ENCODE measurements at regions of chrX and their contacts with region 1.

Region 1: DNA sequence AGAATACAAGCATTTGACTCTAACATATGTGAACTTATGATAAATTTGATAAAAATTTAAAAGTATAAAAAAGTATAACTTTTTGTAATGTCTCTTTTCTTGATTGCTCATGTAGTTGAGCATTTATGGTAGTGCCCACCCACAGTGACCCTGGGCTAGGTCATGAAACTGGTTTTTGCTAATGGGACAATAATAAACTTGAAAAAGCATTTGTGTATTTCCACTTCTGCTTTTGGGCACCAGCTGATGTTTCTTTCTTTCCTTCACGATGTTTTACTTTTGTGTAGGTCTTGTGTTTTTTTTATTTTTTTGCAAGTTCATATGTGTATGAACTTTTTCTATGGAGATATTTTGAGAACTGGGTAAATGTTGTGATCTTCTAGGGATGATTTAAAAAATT is 313.1 kb downstream of the CBLL2 start:
- DNase-seq: no peak
- ATAC-seq: no peak
- H3K4me3 ChIP-seq: no peak overlapping the region
- H3K27ac ChIP-seq: no peak overlapping the region
- H3K4me1 ChIP-seq: no peaks in the 10 kb centered on the region
- H3K27me3 ChIP-seq: no peaks in the 10 kb centered on the region
- CTCF ChIP-seq: no peak
- POLR2A ChIP-seq: no peak
- RAD21 ChIP-seq: no peak

Region 2: DNA sequence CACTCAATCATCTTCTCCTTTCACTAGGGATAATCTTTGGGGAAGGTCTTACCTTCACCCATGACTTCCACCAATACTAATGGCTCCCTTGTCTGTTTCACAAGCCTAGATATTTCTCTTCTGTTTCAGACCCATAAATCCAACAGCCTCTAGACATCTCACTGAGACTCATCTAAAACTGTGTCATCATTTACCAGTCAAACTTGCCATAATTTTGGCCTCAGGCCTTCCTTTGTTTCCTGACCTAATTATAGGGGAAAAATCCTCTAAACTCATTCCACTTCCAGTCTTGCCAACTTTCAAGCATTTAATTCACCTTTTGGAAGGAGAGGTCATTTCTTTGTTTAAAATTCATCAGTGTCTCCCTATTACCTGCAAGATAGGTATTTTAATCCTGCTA is 1392.6 kb before region 1 on chrX:
- CTCF ChIA-PET with region 1: no interaction called
- POLR2A ChIA-PET with region 1: no interaction called
- dilution Hi-C with region 1: no loop called
- in situ Hi-C with region 1: no loop called
- intact Hi-C with region 1: loop called (anchors 5 kb)
- DNase-seq: no peak
- ATAC-seq: no peak
- H3K4me3 ChIP-seq: no peak overlapping the region
- H3K27ac ChIP-seq: no peak overlapping the region
- H3K4me1 ChIP-seq: no peaks in the 10 kb centered on the region
- H3K27me3 ChIP-seq: no peaks in the 10 kb centered on the region
- CTCF ChIP-seq: no peak
- POLR2A ChIP-seq: no peak
- RAD21 ChIP-seq: no peak